ENCODE measurements at regions of chr4 and their contacts with region 1.

Region 1: GRCh38 chr4:52983563-52984303 is 121.6 kb downstream of the RASL11B start:
- DNase-seq: no peak
- H3K4me3 Mint-ChIP-seq: no peak overlapping the region
- H3K27ac Mint-ChIP-seq: no peak overlapping the region
- H3K4me1 Mint-ChIP-seq: peaks cover 5% of the 10 kb centered on the region
- H3K27me3 Mint-ChIP-seq: no peaks in the 10 kb centered on the region

Region 2: GRCh38 chr4:52376132-52376704 is 607.5 kb before region 1 on chr4:
- CTCF ChIA-PET with region 1: interaction called, 21 read pairs
- POLR2A ChIA-PET with region 1: no interaction called
- DNase-seq: no peak
- H3K4me3 Mint-ChIP-seq: no peak overlapping the region
- H3K27ac Mint-ChIP-seq: no peak overlapping the region
- H3K4me1 Mint-ChIP-seq: no peaks in the 10 kb centered on the region
- H3K27me3 Mint-ChIP-seq: peaks cover 11% of the 10 kb centered on the region